BJ (cell line): ENCODE measurements at regions of chr11 and their contacts with region 1.

Region 1: GRCh38 chr11:83222499-83222898 is 29.0 kb downstream of the ANKRD42 start:
- DNase-seq: no peak
- H3K4me3 ChIP-seq: no peak overlapping the region
- H3K27me3 ChIP-seq: no peaks in the 10 kb centered on the region
- CTCF ChIP-seq: no peak

Region 2: DNA sequence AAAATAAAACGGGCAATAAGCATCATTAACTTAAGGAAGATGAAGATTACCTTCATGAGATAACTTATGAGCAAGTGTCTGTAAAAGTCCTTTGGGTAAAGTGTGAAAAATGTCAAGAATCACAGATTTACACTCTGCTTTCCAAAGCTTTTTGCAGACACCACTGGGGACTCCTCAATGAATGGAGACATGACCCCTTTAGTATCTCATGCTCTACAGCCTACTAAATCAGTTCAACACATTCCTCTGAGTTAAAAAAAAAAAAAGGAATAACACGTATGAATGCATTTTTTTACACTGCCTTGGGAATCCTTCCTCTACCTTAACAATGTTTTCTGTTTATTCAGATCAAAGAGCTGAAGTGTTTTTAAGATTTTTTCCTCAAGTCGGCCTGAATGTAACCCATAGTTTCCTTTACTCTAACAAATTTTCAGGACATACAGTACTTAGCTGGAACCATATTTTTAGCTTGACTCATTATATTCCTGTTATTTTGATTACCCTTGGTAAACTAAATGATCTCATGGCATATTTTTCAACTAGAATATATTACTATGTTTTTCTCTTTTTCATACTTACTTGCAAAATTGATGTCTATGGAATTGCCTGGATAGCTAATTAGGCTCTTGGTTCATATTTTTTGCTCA is 124.9 kb before region 1 on chr11:
- CTCF ChIA-PET with region 1: no interaction called
- POLR2A ChIA-PET with region 1: interaction called, 12 read pairs
- DNase-seq: no peak
- H3K4me3 ChIP-seq: no peak overlapping the region
- H3K27me3 ChIP-seq: no peaks in the 10 kb centered on the region
- CTCF ChIP-seq: no peak